ENCODE measurements at regions of chr2 and their contacts with region 1.

Region 1: GRCh38 chr2:72862239-72862988 is 24.8 kb upstream of the SPR start:
- DNase-seq: peak; percentile 84
- H3K4me3 ChIP-seq: peak overlapping the region in 2 of 3 experiments; percentile 13 to 33
- H3K27ac ChIP-seq: no peak overlapping the region
- H3K4me1 ChIP-seq: peaks cover 18% of the 10 kb centered on the region
- H3K27me3 ChIP-seq: no peaks in the 10 kb centered on the region
- CTCF ChIP-seq: peak; percentile 97 to 99

Region 2: DNA sequence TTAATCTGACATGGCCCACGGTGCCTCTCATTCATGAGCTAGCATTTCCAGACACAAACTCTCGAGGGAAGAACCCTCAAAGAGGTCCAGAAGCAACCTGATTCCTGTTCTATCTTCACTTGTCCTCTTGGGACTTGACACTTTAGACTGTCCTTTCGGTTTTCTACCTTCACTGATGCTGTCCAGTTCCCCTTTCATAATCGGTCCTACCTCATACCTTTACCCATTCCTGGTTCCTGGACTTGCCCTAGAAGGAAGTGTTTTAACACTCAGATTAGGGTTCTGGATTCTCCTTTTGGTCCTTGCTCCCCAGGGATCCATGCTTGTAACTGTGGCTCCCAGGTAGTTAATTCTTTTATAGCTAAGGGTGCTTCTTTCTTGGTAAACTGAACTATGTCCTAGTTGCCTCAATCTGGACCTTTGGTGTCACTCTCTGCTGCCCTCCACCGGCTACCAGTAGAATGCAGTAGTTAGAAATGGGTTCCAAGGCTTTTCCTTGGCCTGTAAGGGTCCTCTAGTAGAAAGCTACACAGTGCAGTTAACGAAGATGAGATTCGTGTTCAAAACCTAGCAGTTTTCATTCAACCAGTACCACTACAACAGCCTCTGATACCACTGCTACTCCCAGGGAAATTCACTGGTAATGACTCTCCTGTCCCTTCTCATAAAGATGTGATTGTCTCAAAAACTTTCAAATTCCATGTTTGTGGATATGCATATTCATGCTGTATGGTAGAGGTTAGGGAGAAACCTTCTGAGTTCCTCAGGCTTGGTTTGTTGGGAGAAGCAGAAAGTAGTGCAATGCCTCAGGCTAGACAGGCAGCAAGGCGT is 536.6 kb before region 1 on chr2:
- CTCF ChIA-PET with region 1: no interaction called
- dilution Hi-C with region 1: no loop called
- in situ Hi-C with region 1: no loop called
- intact Hi-C with region 1: loop called (anchors 10 kb)
- DNase-seq: no peak
- H3K4me3 ChIP-seq: no peak overlapping the region
- H3K27ac ChIP-seq: no peak overlapping the region
- H3K4me1 ChIP-seq: no peaks in the 10 kb centered on the region
- H3K27me3 ChIP-seq: no peaks in the 10 kb centered on the region
- CTCF ChIP-seq: peak; percentile 75 to 80

Region 3: GRCh38 chr2:72457801-72458516 is 404.5 kb before region 1 on chr2:
- CTCF ChIA-PET with region 1: no interaction called
- dilution Hi-C with region 1: no loop called
- in situ Hi-C with region 1: no loop called
- intact Hi-C with region 1: no loop called
- DNase-seq: peak; percentile 6
- H3K4me3 ChIP-seq: no peak overlapping the region
- H3K27ac ChIP-seq: no peak overlapping the region
- H3K4me1 ChIP-seq: no peaks in the 10 kb centered on the region
- H3K27me3 ChIP-seq: no peaks in the 10 kb centered on the region
- CTCF ChIP-seq: no peak

Region 4: DNA sequence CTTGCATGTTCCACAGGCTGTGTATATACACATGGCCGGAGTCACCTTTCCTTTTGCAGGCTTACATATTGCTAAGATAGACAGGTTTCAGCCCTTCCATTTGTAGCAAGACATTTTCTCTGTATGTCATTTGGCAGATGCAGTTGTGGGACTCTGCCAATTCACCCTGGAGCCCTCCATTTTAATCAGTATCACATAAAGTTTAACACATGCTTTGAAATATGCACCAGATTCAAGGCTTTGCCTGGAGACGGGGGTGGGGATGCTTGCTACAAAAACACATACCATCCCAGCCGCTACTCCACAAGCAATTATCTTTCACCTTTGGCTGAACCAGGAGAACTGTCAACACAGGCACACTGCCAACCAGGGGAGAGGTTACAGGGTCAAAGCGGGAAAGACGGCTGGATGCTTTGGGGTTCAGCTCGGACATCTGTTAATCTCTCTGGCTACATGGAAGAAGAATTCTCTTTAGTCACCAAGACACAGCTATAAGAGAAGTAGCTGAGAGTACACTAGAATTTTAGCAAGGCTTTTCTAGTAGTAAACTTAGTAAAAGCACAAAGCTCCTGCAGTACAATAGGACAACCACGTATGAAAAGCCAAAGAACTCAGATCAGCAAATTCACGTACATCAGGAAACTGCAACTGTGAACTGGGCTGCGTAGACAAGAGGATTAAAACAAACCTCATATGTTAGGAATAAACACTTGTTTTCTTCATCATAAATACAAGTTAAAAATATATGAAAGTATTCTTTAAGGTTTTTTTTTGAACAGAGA is 167.5 kb before region 1 on chr2:
- CTCF ChIA-PET with region 1: interaction called, 14 read pairs
- dilution Hi-C with region 1: no loop called
- in situ Hi-C with region 1: no loop called
- intact Hi-C with region 1: no loop called
- DNase-seq: no peak
- H3K4me3 ChIP-seq: no peak overlapping the region
- H3K27ac ChIP-seq: no peak overlapping the region
- H3K4me1 ChIP-seq: peaks cover under 1% of the 10 kb centered on the region
- H3K27me3 ChIP-seq: no peaks in the 10 kb centered on the region
- CTCF ChIP-seq: no peak

Region 5: GRCh38 chr2:72780477-72780876 is 81.9 kb before region 1 on chr2:
- CTCF ChIA-PET with region 1: no interaction called
- dilution Hi-C with region 1: no loop called
- in situ Hi-C with region 1: loop called in 1 of 2 experiments (anchors 5 kb)
- intact Hi-C with region 1: no loop called
- DNase-seq: peak; percentile 53
- H3K4me3 ChIP-seq: no peak overlapping the region
- H3K27ac ChIP-seq: no peak overlapping the region
- H3K4me1 ChIP-seq: peaks cover 14% of the 10 kb centered on the region
- H3K27me3 ChIP-seq: no peaks in the 10 kb centered on the region
- CTCF ChIP-seq: no peak

Region 6: DNA sequence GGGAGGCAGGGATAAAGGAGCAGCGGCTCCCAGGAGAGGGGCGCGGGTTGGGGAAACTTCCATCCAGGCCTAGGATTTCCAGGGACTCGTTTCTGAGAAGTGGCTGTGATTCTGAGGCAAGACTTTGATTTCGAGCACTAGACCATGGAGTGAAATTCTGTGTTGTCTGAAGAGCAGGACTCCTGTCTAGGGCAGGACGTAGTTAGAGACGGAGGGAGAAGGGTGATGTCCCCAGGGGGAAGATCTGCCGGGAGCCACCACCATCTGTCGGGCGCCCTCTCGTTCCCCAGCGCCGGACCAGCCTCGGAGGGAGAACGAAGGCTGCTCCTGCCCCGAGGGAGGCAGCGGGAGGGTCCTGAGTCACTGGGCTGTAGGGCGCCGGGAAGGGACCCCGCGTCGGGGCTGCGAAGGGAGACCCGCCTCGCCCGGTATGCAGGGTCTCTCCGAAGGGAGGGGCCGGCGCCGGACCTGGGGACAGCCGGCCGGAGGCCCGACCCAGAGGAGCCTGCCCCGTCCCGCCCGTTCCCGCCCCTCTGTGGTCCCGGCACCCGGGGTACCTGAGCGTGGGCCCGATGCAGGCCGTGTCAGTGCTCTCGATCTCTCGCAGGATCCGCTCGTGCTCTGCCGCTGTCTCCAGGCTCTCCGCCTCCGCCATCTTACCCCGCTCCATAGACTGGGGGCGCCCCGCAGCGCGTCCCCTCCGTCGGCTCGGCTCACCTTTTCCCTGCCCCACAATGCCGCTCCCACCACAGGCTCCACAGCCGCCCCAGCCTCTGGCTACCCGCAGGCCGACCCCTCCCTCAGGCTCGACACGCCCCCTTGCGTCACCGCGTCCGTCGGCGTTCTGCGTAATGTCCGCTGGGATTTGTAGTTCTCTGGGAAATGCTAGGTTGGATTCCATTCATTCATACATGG is 36.9 kb before region 1 on chr2 and contains the start of gene EXOC6B:
- CTCF ChIA-PET with region 1: interaction called, 12 read pairs
- dilution Hi-C with region 1: no loop called
- in situ Hi-C with region 1: no loop called
- intact Hi-C with region 1: loop called (anchors 2 kb)
- DNase-seq: peak; percentile 86
- H3K4me3 ChIP-seq: peak within 1 kb of the TSS; percentile 74 to 79 (median 76)
- H3K27ac ChIP-seq: peak within 1 kb of the TSS; percentile 83
- H3K4me1 ChIP-seq: peaks cover 42% of the 10 kb centered on the region
- H3K27me3 ChIP-seq: no peaks in the 10 kb centered on the region
- CTCF ChIP-seq: no peak
- total RNA-seq, gene EXOC6B: 38.3 to 48.9 TPM

Measured in mammary epithelial cell (primary cell).